AG04450 (cell line): ENCODE measurements at regions of chr3 and their contacts with region 1.

Region 1: DNA sequence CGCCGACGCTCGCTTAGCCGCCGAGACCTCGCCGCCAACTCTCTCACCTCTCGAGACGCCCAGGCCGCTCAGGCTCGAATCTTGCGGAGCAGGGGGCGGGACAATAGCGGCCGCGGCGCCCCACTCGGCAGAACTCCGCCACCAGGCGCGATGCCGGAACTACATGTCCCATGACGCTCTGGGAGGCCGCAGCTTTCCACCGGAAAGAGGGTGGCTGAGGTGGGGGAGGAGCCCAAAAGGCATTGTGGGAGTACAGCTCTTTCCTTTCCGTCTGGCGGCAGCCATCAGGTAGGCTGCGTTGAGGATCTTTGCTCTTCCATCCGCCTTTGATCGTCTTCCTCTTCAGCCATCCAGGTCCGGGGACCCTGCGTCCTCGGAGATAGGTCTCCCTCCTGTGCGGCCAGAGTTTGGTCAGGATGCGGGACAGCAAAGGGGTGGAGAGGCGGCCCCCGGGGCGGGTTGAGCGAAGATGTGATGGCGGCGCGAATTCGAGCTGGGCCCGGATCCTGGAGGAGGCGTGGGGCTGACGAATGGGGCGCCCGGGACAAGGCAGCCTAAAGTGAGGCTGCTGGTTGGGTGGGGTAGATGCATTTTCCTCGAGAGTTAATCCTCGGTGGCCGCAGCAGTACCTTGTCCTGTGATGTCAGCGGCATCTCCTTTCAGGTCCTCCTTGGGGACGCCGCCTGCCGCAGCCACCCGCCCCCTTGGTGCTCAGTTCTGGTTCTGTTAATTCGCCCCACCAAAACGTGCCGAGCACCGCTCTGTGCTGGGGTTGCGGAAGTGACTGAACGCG is at the starts of genes NKIRAS1 and RPL15:
- DNase-seq: peak; percentile 91
- H3K4me3 ChIP-seq: peak within 1 kb of the TSS; percentile 98
- H3K27ac ChIP-seq: peak within 1 kb of the TSS; percentile 75
- H3K27me3 ChIP-seq: no peaks in the 10 kb centered on the region
- CTCF ChIP-seq: peak; percentile 60
- polyA plus RNA-seq, gene NKIRAS1: 6.5 and 10.4 TPM in 2 replicates
- polyA plus RNA-seq, gene RPL15: 3,614 and 3,910 TPM in 2 replicates

Region 2: GRCh38 chr3:23900744-23901143 is 16.3 kb before region 1 on chr3:
- CTCF ChIA-PET with region 1: interaction called, 3 read pairs
- POLR2A ChIA-PET with region 1: interaction called, 14 read pairs
- DNase-seq: no peak
- H3K4me3 ChIP-seq: no peak overlapping the region
- H3K27ac ChIP-seq: no peak overlapping the region
- H3K27me3 ChIP-seq: no peaks in the 10 kb centered on the region
- CTCF ChIP-seq: peak; percentile 28; the same call in 1 of the 2 replicates

Region 3: DNA sequence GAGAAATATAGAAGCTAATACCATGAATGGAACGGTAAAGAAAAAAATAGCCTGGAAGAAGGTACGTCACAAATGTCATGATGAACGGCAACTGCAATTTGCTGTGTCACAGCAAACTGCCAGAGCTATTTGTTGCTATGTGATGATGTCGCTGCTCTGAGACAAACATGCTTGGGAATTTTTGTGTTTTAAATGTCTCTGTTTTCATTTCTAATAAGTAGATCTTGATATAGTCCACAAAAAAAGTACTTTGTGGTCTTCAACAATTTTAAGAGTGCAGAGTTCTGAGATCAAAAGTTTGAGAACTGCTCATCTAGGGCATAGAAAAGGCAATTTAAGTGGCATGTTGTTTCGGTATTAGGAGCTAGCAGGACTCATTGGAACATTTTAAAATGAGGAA is 23.7 kb after region 1 on chr3:
- CTCF ChIA-PET with region 1: no interaction called
- POLR2A ChIA-PET with region 1: interaction called, 33 read pairs
- DNase-seq: no peak
- H3K4me3 ChIP-seq: no peak overlapping the region
- H3K27ac ChIP-seq: no peak overlapping the region
- H3K27me3 ChIP-seq: no peaks in the 10 kb centered on the region
- CTCF ChIP-seq: no peak

Region 4: GRCh38 chr3:23945903-23946751 is 29.0 kb after region 1 on chr3:
- CTCF ChIA-PET with region 1: no interaction called
- POLR2A ChIA-PET with region 1: interaction called, 33 read pairs
- DNase-seq: peak; percentile 77
- H3K4me3 ChIP-seq: peak overlapping the region; percentile 86
- H3K27ac ChIP-seq: peak overlapping the region; percentile 91
- H3K27me3 ChIP-seq: no peaks in the 10 kb centered on the region
- CTCF ChIP-seq: no peak

Region 5: DNA sequence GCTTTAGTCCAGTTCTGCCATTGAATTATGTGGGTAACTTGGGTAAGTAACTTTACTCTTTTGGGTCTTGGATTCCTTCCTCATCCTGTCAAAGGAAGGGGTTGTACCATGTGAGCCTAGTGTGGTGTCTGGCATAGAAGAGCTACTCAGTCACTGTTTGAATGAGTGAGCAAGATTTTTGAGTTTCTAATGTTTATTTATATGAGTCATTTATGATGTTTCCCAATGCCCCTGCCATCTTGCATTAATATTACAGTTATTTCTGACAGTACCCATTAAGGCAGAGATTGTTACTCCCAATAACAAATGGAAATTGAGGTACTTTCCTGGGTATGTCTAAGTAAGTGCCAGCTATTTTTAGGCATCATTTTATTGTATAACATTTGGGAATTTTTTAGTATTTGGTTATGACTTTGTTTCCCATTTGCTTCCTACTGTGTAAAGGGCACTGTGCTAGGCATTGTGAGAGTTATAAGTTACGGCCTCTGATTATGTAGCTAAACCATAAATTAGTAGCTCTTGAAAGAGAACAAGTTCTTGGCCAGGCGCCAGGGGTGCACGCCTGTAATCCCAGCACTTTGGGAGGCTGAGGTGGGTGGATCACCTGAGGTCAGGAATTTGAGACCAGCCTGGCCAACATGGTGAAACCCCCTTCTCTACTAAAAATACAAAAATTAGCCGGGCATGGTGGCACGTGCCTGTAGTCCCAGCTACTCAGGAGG is 51.5 kb after region 1 on chr3:
- CTCF ChIA-PET with region 1: no interaction called
- POLR2A ChIA-PET with region 1: interaction called, 13 read pairs
- DNase-seq: no peak
- H3K4me3 ChIP-seq: no peak overlapping the region
- H3K27ac ChIP-seq: no peak overlapping the region
- H3K27me3 ChIP-seq: no peaks in the 10 kb centered on the region
- CTCF ChIP-seq: no peak